Activated B cell treated with CpG ODN at 0.5 μM for 24 hours (primary cell): ENCODE measurements at regions of chr6 and their contacts with region 1.

Region 1: GRCh38 chr6:137218917-137219663 is at the start of gene IFNGR1:
- DNase-seq: peak; percentile 97
- ATAC-seq: peak; percentile 85
- H3K4me3 Mint-ChIP-seq: peak within 1 kb of the TSS; percentile 99
- H3K27ac Mint-ChIP-seq: peak within 1 kb of the TSS; percentile 98
- H3K4me1 Mint-ChIP-seq: peaks cover 83% of the 10 kb centered on the region
- H3K27me3 Mint-ChIP-seq: no peaks in the 10 kb centered on the region
- CTCF ChIP-seq: no peak
- total RNA-seq, gene IFNGR1: 60.5 and 65.6 TPM in 2 replicates

Region 2: DNA sequence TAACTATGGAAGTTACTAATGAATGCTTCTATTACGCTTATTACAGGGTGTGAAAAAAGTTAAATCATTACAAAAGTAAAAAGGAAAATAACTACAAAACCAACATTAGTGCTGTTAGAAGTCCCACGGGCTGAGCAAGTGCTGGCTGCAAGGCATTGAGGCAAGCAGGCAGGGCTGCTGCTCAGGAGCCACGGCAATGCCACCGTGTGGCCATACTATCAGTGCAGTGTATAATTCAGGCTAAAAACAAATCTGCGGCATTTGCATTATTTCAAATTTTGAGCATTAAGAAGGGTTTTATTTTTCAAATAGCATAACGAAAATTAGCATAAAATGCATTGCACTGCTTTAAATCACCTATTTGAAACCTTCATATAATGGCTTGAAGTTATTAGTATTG is 17.0 kb before region 1 on chr6:
- CTCF ChIA-PET with region 1: interaction called, 3 read pairs
- POLR2A ChIA-PET with region 1: interaction called, 4 read pairs
- intact Hi-C with region 1: loop called (anchors 1 kb)
- DNase-seq: no peak
- ATAC-seq: peak; percentile 89
- H3K4me3 Mint-ChIP-seq: peak overlapping the region; percentile 24
- H3K27ac Mint-ChIP-seq: peak overlapping the region; percentile 65
- H3K4me1 Mint-ChIP-seq: peaks cover 37% of the 10 kb centered on the region
- H3K27me3 Mint-ChIP-seq: no peaks in the 10 kb centered on the region
- CTCF ChIP-seq: no peak

Region 3: GRCh38 chr6:137261393-137262160 is 42.5 kb after region 1 on chr6:
- CTCF ChIA-PET with region 1: no interaction called
- POLR2A ChIA-PET with region 1: interaction called, 8 read pairs
- intact Hi-C with region 1: loop called (anchors 1 kb)
- DNase-seq: no peak
- ATAC-seq: peak; percentile 91
- H3K4me3 Mint-ChIP-seq: peak overlapping the region; percentile 32
- H3K27ac Mint-ChIP-seq: peak overlapping the region; percentile 74
- H3K4me1 Mint-ChIP-seq: peaks cover 40% of the 10 kb centered on the region
- H3K27me3 Mint-ChIP-seq: no peaks in the 10 kb centered on the region
- CTCF ChIP-seq: no peak

Region 4: DNA sequence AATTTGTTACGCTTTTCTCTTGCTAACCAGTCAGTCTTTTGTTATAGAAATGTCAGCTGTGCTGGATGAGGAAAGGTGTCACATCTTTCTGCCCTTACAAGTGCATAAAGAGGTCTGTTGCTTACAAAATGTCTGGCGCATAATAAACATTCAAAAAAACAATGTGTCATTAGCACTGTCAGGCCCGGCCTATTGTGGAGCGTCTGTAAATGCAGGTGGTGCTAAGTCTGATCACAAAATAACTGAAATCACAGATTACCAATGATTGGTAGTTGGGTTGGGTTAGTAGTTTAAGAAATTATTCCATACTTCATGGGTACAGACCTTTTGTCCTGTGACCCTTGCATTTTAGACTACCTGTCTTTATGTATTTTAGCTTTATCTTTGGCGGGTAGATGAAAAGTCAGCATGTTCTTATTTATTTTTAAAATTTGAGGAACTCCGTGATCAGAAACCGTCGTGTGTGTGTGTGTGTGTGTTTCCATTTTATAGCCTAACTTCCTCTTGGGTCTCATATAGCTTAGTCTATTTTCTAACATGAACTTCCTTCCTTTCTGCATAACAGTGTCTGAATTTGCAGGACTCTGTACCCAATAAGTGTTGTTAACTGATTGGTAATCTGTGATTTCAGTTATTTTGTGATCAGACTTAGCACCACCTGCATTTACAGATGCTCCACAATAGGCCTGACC is 88.2 kb after region 1 on chr6:
- CTCF ChIA-PET with region 1: no interaction called
- POLR2A ChIA-PET with region 1: no interaction called
- intact Hi-C with region 1: loop called (anchors 2 kb)
- DNase-seq: no peak
- ATAC-seq: peak; percentile 79
- H3K4me3 Mint-ChIP-seq: peak overlapping the region; percentile 62
- H3K27ac Mint-ChIP-seq: peak overlapping the region; percentile 77
- H3K4me1 Mint-ChIP-seq: peaks cover 47% of the 10 kb centered on the region
- H3K27me3 Mint-ChIP-seq: no peaks in the 10 kb centered on the region
- CTCF ChIP-seq: no peak

Region 5: DNA sequence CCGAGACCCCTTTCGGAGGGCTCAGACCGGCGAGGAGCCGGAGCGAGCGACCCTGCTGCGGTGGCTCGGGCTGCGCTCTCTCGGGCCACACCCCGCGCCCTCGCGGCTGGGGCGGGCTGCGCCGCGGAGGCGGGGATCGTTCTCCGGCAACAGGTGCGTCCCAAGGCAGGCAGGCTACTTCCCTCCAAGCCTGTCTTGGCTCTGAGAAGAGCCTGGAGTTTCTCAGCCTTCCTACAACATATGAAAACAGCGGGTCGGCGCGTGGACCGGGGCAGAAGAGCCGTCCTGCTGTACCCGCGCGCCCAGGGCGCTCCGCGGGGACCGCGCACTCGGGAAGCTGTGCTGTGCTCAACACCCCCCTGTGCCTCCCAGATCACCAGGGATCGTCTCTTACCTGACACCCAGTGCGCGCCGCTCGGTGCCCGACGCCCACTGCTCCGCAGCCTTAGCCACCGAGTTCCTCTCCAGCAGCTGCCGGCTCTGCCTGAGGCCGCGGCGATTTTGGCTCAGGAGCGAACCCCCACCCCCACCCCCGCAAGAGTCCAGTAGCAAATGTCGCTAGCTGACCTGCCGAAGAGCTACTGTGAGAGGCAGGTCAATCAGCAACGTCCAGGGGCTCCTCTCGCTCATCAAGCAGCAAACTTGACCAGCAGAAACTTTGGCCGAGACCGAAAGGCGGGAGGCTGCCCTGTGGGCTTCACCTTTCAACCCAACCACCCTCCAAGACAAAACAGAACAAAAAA is 278.8 kb after region 1 on chr6:
- CTCF ChIA-PET with region 1: no interaction called
- POLR2A ChIA-PET with region 1: no interaction called
- intact Hi-C with region 1: no loop called
- DNase-seq: peak; percentile 37
- ATAC-seq: peak; percentile 34
- H3K4me3 Mint-ChIP-seq: peak overlapping the region; percentile 66
- H3K27ac Mint-ChIP-seq: no peak overlapping the region
- H3K4me1 Mint-ChIP-seq: peaks cover 44% of the 10 kb centered on the region
- H3K27me3 Mint-ChIP-seq: peaks cover 61% of the 10 kb centered on the region
- CTCF ChIP-seq: no peak

Region 6: DNA sequence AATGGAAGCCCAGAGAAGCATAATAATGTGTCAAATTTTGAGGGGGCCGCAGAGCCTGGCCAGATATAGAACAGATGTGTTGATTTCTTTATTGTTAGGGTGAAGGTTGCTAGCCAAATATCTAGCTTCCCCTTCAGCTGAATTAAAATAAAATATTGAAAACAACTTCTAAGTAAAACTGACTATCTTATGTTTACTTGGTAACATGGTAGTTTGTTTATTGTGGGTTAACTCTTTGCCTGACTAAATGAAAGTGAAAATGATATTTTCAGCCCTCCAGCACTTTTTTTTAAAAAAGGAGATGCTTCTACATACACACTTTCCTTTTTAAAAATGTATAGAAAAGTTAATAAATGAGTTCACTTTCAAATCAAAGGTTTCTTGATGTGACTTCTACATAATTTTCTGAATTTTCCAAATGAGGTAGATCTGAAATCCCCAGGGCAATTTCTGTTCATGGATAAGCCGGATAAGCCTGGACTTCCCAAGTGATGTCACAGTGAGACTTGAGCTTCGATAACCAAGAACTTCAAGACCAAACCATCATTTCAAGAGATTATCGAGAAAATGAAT is 447.2 kb after region 1 on chr6:
- CTCF ChIA-PET with region 1: no interaction called
- POLR2A ChIA-PET with region 1: no interaction called
- intact Hi-C with region 1: no loop called
- DNase-seq: no peak
- ATAC-seq: no peak
- H3K4me3 Mint-ChIP-seq: no peak overlapping the region
- H3K27ac Mint-ChIP-seq: no peak overlapping the region
- H3K4me1 Mint-ChIP-seq: no peaks in the 10 kb centered on the region
- H3K27me3 Mint-ChIP-seq: peaks cover 14% of the 10 kb centered on the region
- CTCF ChIP-seq: no peak